AG04450 (cell line): ENCODE measurements at regions of chr11 and their contacts with region 1.

Region 1: DNA sequence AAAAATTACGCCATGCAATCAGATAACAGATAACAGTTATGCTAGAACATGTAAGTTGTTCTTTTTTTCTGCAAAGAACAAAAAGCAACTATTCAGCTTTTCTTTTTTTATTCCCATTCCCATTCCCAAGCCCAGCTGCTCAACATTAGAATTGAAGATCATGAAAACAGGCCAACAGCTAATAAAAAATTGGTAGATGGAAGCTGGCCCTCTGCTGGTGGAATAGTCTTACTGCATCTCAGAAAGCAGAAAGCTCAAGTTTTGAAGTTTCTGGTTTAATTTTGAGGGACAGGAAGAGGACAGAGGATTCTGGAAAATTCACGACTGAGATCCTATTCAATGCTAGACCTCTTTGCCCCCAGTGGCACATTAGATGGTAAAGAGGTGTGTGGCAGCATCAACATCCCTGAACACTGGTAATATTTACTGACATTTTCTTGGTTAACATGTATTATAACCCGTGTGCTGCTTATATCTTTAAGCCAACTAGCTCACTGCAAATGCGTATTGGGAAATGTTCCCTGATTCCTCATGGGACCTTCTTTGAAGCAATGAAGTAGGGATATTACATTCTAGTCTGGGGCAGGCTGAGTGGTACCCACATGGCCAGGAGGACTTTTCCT is 591.2 kb downstream of the OPCML start:
- DNase-seq: peak; percentile 15
- H3K4me3 ChIP-seq: no peak overlapping the region
- H3K27ac ChIP-seq: no peak overlapping the region
- H3K27me3 ChIP-seq: peaks cover 7% of the 10 kb centered on the region
- CTCF ChIP-seq: peak; percentile 90

Region 2: DNA sequence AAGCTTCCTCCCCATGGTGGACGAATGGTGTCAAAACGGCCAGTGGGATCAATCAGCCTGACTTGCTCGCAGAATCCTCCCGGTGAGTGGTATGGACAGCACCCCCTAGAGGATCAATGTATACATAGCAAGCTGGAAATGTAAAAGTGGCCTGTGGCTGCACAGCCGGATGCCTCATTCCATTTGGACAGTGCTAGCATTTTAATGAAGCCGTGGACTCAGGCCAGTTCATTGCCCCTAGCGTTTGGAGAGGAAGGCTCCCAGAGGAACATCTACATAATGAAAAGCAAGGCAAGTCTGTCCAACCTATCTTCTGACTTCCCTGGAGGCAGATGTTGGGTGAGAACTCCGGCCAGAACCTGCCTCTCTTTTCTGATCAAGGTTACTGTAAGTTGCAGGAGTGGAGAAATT is 628.4 kb before region 1 on chr11:
- CTCF ChIA-PET with region 1: interaction called, 11 read pairs
- POLR2A ChIA-PET with region 1: no interaction called
- DNase-seq: no peak
- H3K4me3 ChIP-seq: no peak overlapping the region
- H3K27ac ChIP-seq: no peak overlapping the region
- H3K27me3 ChIP-seq: no peaks in the 10 kb centered on the region
- CTCF ChIP-seq: peak; percentile 69

Region 3: DNA sequence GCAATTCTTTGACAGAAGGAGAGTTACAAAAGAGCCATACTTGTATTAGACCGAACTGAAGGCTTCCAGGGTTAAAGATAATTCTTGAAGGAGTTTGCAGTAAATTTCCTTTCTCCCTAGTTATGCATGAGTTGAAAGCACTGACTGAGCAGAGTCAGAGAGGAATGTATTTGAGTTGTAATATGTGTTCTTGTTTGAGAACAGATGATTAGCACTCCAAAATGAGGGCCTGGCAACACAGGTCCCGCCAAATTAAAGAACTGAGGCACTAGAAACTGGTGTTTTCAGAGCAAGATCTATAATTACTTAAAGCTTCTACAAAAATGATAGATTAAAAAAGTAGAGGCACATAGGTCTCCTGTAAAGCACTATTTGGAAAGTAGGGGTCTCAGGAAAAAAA is 379.2 kb before region 1 on chr11:
- CTCF ChIA-PET with region 1: interaction called, 15 read pairs
- POLR2A ChIA-PET with region 1: no interaction called
- DNase-seq: no peak
- H3K4me3 ChIP-seq: no peak overlapping the region
- H3K27ac ChIP-seq: no peak overlapping the region
- H3K27me3 ChIP-seq: no peaks in the 10 kb centered on the region
- CTCF ChIP-seq: no peak

Region 4: GRCh38 chr11:132844956-132845696 is 96.0 kb before region 1 on chr11:
- CTCF ChIA-PET with region 1: interaction called, 15 read pairs
- POLR2A ChIA-PET with region 1: no interaction called
- DNase-seq: peak; percentile 77
- H3K4me3 ChIP-seq: no peak overlapping the region
- H3K27ac ChIP-seq: no peak overlapping the region
- H3K27me3 ChIP-seq: no peaks in the 10 kb centered on the region
- CTCF ChIP-seq: no peak

Region 5: DNA sequence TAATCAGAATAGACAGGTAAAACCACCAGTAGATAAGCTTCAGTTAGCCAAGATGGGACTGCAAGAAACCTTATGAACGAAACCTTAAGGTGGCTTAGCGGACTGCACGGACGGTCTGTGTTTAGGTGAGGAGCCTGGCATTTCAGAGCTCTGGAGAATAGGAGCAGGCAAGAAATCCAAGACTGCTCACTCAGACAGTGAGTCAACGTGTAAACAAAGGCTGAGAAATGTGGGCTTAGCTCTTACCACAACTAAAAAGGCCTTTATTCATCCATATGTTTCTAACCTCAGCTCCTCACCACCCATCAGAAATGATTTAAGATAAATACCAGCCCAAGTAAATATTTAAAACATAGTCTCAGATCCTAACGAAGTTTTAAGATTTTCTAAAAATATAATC is 66.5 kb before region 1 on chr11:
- CTCF ChIA-PET with region 1: interaction called, 15 read pairs
- POLR2A ChIA-PET with region 1: no interaction called
- DNase-seq: peak; percentile 90
- H3K4me3 ChIP-seq: no peak overlapping the region
- H3K27ac ChIP-seq: no peak overlapping the region
- H3K27me3 ChIP-seq: no peaks in the 10 kb centered on the region
- CTCF ChIP-seq: no peak

Region 6: DNA sequence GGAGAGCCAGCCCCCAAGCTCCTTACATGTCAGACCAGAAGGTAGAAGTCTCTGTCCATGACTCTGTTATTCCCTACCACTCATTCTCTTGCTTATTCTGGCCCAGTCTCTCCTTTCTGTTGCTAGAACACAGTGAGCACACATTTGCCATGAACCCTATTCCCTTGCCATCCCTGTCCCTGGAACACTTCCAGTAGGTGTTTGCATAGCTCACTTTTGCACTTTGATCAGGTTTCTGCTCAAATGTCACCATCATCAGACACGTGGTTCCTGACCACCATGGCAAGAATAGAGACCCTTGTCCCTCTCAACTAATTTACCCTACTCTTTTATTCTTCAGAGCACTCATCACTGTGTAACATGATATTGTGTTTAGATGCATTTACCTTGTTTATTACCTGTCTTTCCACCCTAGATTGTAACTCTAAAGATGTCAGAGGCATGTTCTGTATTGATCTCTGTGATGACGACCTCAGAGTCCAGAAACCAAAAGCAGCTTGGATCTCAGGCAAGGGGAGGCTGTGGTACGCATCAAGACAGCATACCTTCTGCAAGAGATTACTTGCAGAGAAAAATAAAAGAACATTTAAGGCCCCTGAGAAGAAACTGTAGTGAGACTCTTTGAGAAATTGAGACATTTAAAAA is 15.2 kb before region 1 on chr11:
- CTCF ChIA-PET with region 1: interaction called, 35 read pairs
- POLR2A ChIA-PET with region 1: no interaction called
- DNase-seq: no peak
- H3K4me3 ChIP-seq: no peak overlapping the region
- H3K27ac ChIP-seq: no peak overlapping the region
- H3K27me3 ChIP-seq: no peaks in the 10 kb centered on the region
- CTCF ChIP-seq: no peak

Region 7: DNA sequence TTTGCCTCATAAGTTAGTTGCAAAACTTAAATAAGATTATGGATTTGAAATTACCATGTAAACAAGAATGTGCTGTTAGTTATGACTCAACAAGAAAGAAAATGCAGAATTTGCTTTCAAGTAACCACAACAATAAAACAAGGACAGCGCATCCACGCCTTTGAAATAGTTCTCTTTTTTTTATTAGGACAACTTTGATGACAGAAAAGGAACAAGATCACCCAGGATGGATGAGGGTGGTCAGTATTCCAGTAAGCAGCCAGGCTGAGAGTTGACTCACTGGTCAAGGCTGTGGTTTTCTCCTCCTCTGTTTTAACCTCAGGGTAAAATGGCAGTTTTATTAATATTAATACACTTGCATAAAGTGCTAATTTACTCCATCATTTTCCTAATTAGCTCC is 46.8 kb after region 1 on chr11:
- CTCF ChIA-PET with region 1: no interaction called
- POLR2A ChIA-PET with region 1: no interaction called
- DNase-seq: no peak
- H3K4me3 ChIP-seq: no peak overlapping the region
- H3K27ac ChIP-seq: no peak overlapping the region
- H3K27me3 ChIP-seq: peaks cover 14% of the 10 kb centered on the region
- CTCF ChIP-seq: no peak

Region 8: DNA sequence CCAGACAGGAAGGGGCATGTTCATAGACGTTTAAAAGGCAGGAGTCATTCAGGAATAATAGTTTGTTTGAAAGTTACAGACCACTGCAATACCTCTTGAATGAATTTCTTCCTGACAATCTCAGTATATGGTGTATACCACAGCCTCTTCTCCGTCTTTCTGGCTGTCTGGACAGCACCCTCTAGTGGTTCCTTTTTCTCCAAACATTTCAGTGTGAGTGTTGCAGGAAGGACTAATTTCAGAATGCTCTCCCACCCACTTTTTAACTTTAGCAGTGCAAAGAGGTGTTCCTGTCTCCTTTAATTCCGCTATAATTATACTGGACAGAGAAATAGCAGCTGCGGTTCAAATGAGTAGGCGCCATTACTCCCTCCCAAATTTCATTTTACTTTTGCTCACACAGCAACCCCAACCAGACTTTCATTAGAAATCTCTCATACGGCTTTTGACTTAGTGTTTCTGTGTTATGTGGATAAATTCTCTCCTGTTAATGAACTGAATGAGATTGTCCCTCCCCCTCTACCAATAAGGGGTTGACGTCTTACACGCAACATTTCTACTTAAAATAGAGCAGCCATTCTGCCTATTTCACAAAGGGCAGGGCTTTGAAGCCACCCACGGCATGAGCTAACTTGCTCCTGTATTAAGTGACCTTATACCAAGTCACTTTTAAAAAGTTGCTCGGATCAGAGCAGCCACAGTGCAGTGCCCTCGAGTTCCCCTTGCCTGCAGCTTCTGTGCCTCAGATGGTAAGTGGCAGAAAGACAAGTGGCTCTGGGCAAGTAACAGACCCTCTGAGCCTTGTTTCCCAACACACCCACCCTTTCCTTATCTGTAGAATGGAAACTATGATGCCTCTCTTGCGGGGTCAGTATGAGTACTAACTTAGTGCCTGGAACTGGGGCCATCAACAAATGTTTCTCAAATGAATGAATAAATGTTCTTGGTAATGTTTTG is 222.6 kb after region 1 on chr11:
- CTCF ChIA-PET with region 1: no interaction called
- POLR2A ChIA-PET with region 1: no interaction called
- DNase-seq: peak; percentile 15
- H3K4me3 ChIP-seq: no peak overlapping the region
- H3K27ac ChIP-seq: no peak overlapping the region
- H3K27me3 ChIP-seq: peaks cover 2% of the 10 kb centered on the region
- CTCF ChIP-seq: peak; percentile 76